Aorta (tissue), 5 donors: ENCODE measurements at regions of chr3 and their contacts with region 1.

Region 1: GRCh38 chr3:172057059-172057458 is 17.7 kb downstream of the FNDC3B start:
- DNase-seq: no peak
- ATAC-seq: no peak
- H3K4me3 ChIP-seq: no peak overlapping the region
- H3K27ac ChIP-seq: peak overlapping the region in 1 of 2 donors; percentile 57
- H3K4me1 ChIP-seq: peaks cover 4 to 15% of the 10 kb centered on the region in 2 donors
- H3K27me3 ChIP-seq: no peaks in the 10 kb centered on the region

Region 2: GRCh38 chr3:171838218-171838761 is 218.8 kb before region 1 on chr3:
- intact Hi-C with region 1: no loop called
- DNase-seq: peak in 1 of 2 donors; percentile 53
- ATAC-seq: peak; percentile 83
- H3K4me3 ChIP-seq: peak overlapping the region in 1 of 2 donors; percentile 41
- H3K27ac ChIP-seq: peak overlapping the region in 1 of 2 donors; percentile 64
- H3K4me1 ChIP-seq: peaks cover 0 to 3% of the 10 kb centered on the region in 2 donors
- H3K27me3 ChIP-seq: no peaks in the 10 kb centered on the region

Region 3: GRCh38 chr3:172102123-172102882 is 45.2 kb after region 1 on chr3:
- intact Hi-C with region 1: loop called in 1 of 2 experiments (anchors 5 kb)
- DNase-seq: no peak
- ATAC-seq: no peak
- H3K4me3 ChIP-seq: no peak overlapping the region
- H3K27ac ChIP-seq: no peak overlapping the region
- H3K4me1 ChIP-seq: peaks cover 5 to 14% of the 10 kb centered on the region in 2 donors
- H3K27me3 ChIP-seq: no peaks in the 10 kb centered on the region

Region 4: DNA sequence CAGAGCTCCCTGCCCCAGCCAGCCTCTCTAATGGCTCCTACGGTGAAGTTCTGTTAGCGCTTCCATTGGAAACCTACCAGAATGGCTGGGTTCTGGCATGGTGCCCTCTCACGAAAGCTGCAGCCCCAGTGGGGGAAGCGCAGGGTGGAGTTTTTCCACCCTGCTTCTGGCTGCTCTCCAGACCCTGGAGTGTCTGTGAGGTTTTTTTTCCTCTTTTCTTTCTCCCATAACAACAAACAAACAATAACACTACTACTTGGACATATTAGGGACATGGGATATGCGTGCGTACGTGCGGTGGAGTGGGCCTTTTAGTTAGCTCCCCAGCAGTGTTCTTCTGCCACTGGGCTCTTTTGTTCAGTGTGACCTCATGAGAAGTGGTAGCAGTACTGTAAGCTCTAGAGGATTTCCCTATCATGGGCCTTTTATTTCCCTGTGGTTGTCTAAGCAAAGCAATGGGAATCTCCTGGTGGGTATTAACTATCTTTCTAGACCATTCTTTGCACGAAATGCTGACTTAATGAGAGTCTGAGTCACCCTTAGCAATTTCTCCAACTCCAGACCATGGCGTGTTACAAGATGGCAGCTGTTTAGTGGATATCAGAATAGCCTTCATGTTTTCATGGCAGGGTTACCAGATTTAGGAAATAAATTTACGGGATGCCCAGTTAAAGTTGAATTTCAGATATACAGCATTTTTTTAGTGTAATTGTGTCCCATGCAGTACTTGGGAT is 144.2 kb after region 1 on chr3:
- intact Hi-C with region 1: no loop called
- DNase-seq: peak; percentile 89 to 90
- ATAC-seq: peak; percentile 72
- H3K4me3 ChIP-seq: no peak overlapping the region
- H3K27ac ChIP-seq: peak overlapping the region; percentile 28 to 98
- H3K4me1 ChIP-seq: peaks cover 13 to 16% of the 10 kb centered on the region in 2 donors
- H3K27me3 ChIP-seq: no peaks in the 10 kb centered on the region

Region 5: GRCh38 chr3:173465113-173465512 is 1408.1 kb after region 1 on chr3:
- intact Hi-C with region 1: no loop called
- DNase-seq: no peak
- ATAC-seq: no peak
- H3K4me3 ChIP-seq: no peak overlapping the region
- H3K27ac ChIP-seq: no peak overlapping the region
- H3K4me1 ChIP-seq: no peaks in the 10 kb centered on the region
- H3K27me3 ChIP-seq: no peaks in the 10 kb centered on the region